Activated CD4-positive, alpha-beta T cell treated with anti-CD3 and anti-CD28 coated beads for 36 hours (primary cell): ENCODE measurements at regions of chr14 and their contacts with region 1.

Region 1: GRCh38 chr14:100375963-100376735 is 53.0 kb downstream of the SLC25A47 start:
- DNase-seq: peak; percentile 96
- ATAC-seq: peak; percentile 70
- H3K4me3 Mint-ChIP-seq: peak within 1 kb of the TSS; percentile 99
- H3K27ac Mint-ChIP-seq: peak within 1 kb of the TSS; percentile 98
- H3K4me1 Mint-ChIP-seq: peaks cover 37% of the 10 kb centered on the region
- H3K27me3 Mint-ChIP-seq: no peaks in the 10 kb centered on the region

Region 2: DNA sequence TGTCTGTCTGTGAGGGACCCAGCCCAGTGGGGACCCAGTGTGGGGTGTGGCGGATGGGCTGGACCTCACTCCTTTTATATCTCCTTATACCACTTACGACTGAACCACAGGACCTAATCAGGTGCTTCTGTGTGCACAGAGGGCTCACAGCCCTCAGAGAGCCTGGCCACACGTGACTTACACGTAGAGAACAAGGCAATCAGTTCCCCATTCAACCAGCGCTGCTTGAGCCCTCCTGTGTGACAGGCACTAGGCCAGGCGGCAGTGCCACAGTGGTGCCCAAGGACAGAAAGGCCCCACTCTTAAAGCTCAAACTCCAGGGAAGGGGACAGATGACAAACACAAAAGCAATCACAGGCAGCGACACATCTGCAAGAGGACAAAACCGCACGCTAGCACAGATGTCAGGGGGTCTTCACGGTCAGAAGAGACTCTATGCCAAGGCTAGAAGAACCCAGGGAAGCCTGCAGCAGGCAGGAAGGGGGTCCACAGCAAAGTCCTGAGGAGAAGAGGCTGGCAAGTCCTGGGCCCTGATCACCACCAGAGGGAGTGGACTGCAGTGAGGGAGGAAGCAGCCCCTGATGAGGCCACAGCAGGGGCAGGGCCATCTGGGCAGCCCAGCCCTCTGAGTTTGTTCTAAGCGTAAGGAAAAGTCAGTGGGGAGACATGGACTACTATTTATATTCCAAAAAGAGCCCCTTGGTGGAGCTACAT is 934.8 kb before region 1 on chr14:
- CTCF ChIA-PET with region 1: no interaction called
- POLR2A ChIA-PET with region 1: no interaction called
- intact Hi-C with region 1: no loop called
- DNase-seq: no peak
- ATAC-seq: no peak
- H3K4me3 Mint-ChIP-seq: no peak overlapping the region
- H3K27ac Mint-ChIP-seq: no peak overlapping the region
- H3K4me1 Mint-ChIP-seq: peaks cover 39% of the 10 kb centered on the region
- H3K27me3 Mint-ChIP-seq: no peaks in the 10 kb centered on the region

Region 3: DNA sequence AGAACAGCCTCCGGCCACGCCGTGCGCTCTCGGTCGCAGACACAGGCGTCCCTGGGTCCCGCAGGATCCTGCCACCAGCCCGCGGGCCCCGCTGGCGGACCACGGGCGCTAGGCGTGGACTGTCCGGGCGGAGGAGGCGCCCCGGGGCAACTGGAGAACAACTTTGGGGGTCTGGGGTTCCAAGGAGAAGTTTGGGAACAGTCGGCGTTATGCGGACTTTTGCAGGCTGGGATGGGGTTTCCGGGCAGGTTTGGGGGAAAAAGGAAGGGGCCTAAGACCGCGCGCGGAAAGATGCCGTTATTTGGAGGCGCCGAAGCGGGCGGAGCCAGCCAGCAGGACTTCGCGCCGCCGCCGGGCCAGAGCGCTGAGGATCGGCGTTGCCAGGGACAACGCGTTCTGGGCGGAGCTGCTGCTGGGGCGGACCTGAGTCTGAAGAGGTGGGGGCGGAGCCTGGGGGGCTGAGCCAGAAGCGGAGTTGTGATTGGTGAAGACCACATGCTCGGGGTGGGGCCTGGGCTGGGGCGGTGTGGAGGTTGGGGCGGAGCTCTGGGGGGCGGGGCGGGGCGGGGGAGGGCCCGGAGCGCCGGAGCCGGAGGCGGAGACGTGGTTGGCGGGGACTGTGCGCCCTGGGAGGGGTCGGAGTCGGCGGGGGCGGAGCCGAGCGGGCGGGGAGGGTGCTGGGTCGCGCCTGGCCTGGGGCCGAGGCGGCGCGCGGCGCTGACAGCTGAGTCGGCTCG is 692.4 kb before region 1 on chr14 and contains the start of gene CYP46A1:
- CTCF ChIA-PET with region 1: no interaction called
- POLR2A ChIA-PET with region 1: no interaction called
- intact Hi-C with region 1: loop called in 1 of 2 experiments (anchors 10 kb)
- DNase-seq: peak; percentile 100
- ATAC-seq: peak; percentile 97
- H3K4me3 Mint-ChIP-seq: peak within 1 kb of the TSS; percentile 86
- H3K27ac Mint-ChIP-seq: peak within 1 kb of the TSS; percentile 73
- H3K4me1 Mint-ChIP-seq: peaks cover 10% of the 10 kb centered on the region
- H3K27me3 Mint-ChIP-seq: peaks cover 9% of the 10 kb centered on the region
- total RNA-seq, gene CYP46A1: 0.05 to 0.23 TPM

Region 4: GRCh38 chr14:99982537-99983250 is 393.5 kb before region 1 on chr14:
- CTCF ChIA-PET with region 1: no interaction called
- POLR2A ChIA-PET with region 1: no interaction called
- intact Hi-C with region 1: no loop called
- DNase-seq: peak; percentile 77
- ATAC-seq: peak; percentile 94
- H3K4me3 Mint-ChIP-seq: no peak overlapping the region
- H3K27ac Mint-ChIP-seq: peak overlapping the region; percentile 9
- H3K4me1 Mint-ChIP-seq: peaks cover 14% of the 10 kb centered on the region
- H3K27me3 Mint-ChIP-seq: no peaks in the 10 kb centered on the region

Region 5: DNA sequence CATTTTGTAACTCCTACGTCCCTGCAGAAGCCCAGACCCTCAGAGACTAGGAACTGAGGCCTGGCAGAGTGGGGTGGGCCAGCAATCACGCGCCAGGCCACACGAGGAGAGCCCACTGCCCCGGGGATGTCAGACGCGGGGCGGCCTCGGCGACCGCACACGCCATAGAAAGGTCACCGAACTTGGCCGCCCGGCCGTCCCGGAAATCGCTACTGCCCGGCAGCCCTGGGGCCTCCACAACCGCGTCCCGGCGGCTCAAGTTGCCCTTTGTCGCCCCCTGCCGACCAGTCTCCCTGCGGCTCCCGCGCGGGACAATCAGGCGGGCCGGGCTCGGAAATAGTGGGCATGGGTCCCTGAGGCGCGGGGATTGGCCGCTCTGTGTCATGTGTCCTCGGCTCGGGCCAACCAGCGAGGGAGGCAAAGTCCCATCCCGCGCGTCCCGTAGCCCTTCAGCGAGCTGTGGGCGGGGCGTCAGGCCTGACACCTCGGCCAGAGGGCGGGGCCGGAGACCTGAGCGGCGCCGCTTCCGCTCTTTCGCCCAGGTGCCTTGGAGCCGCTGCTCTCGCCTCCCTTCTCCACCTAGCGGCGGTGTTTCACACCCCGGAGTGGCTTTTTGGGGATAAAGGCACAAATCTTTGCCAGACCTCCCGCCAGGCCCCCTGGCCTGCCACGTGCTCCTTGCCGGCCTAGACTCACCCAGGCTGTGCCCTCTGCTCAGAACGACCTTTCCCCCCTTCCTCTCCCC is 183.3 kb before region 1 on chr14:
- CTCF ChIA-PET with region 1: interaction called, 3 read pairs
- POLR2A ChIA-PET with region 1: no interaction called
- intact Hi-C with region 1: loop called (anchors 1 kb)
- DNase-seq: peak; percentile 100
- ATAC-seq: peak; percentile 100
- H3K4me3 Mint-ChIP-seq: peak overlapping the region; percentile 70
- H3K27ac Mint-ChIP-seq: peak overlapping the region; percentile 92
- H3K4me1 Mint-ChIP-seq: peaks cover 13% of the 10 kb centered on the region
- H3K27me3 Mint-ChIP-seq: no peaks in the 10 kb centered on the region

Region 6: GRCh38 chr14:100306420-100307219 is 69.5 kb before region 1 on chr14 and contains the start of gene SLC25A29:
- CTCF ChIA-PET with region 1: no interaction called
- POLR2A ChIA-PET with region 1: no interaction called
- intact Hi-C with region 1: loop called (anchors 1 to 2 kb)
- DNase-seq: peak; percentile 80
- ATAC-seq: peak; percentile 90
- H3K4me3 Mint-ChIP-seq: peak within 1 kb of the TSS; percentile 63
- H3K27ac Mint-ChIP-seq: no peak within 1 kb of the TSS
- H3K4me1 Mint-ChIP-seq: peaks cover 7% of the 10 kb centered on the region
- H3K27me3 Mint-ChIP-seq: peaks cover 14% of the 10 kb centered on the region
- total RNA-seq, gene SLC25A29: 5.4 to 5.8 TPM

Region 7: DNA sequence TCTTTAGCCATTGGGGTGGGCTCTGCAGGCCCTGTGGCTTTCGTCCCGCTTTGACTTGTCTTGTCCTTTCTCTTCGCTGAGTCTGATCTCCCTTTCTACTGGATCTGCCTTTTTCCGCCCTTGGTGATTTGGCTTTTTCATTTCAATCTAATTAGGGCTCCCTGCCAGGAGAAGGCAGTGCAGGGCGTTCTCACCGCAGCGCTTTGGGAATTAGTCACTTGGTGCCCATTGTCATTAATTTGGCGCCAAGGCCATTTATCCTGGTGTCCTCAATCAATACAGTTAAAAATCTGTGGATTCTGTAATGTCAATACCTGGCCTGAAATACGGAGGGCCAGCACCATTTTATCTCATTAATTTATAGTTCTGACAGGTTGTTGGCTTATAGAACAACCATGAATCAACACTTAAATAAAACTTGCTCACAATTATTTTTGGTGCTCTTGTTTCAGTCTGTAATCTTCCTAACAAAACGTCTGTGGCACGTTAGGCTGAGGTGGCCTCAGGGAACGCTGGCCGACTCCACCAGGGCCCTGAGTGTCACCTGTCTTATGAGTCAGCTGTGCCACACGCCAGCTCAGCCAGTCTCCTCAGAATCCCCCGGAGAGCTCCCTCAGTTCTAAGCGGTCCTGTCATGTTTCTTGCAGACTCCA is 95.4 kb after region 1 on chr14:
- CTCF ChIA-PET with region 1: no interaction called
- POLR2A ChIA-PET with region 1: no interaction called
- intact Hi-C with region 1: no loop called
- DNase-seq: no peak
- ATAC-seq: no peak
- H3K4me3 Mint-ChIP-seq: no peak overlapping the region
- H3K27ac Mint-ChIP-seq: no peak overlapping the region
- H3K4me1 Mint-ChIP-seq: peaks cover 4% of the 10 kb centered on the region
- H3K27me3 Mint-ChIP-seq: no peaks in the 10 kb centered on the region

Region 8: GRCh38 chr14:102086972-102087761 is 1711.0 kb after region 1 on chr14 and contains the start of gene HSP90AA1:
- CTCF ChIA-PET with region 1: no interaction called
- POLR2A ChIA-PET with region 1: no interaction called
- intact Hi-C with region 1: loop called in 1 of 2 experiments (anchors 10 kb)
- DNase-seq: peak; percentile 97
- ATAC-seq: peak; percentile 68
- H3K4me3 Mint-ChIP-seq: peak within 1 kb of the TSS; percentile 77
- H3K27ac Mint-ChIP-seq: peak within 1 kb of the TSS; percentile 92
- H3K4me1 Mint-ChIP-seq: peaks cover 46% of the 10 kb centered on the region
- H3K27me3 Mint-ChIP-seq: no peaks in the 10 kb centered on the region
- total RNA-seq, gene HSP90AA1: 1,344 to 1,372 TPM